ENCODE measurements at regions of chr1 and their contacts with region 1.

Region 1: DNA sequence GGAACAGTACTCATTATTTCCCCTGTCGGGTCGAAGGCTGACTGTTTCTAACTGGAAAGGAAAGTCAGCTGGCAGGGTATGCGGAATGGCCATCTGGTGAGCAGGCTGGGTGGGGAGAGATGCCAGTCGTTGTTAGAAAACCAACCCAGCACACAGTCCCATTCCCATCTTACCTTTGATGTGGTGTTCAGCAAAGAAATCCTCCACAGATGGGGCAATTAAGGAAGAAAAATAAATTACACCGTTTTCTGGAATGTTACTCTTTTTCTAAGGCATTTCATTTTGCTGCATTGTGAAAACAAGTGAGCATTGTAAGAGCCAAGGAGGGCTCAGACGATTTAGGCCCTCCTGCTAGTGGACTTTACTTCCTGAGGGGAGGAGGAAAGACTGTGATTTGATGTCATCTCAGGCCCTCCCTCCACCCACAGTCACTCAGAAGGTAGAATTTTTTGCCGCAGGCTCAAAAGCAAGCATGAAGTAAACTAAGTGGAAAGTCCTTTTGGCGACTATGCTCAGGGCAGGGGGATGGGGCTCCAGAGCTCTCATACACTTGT is at the start of gene SLC16A4:
- DNase-seq: peak; percentile 76
- ATAC-seq: peak; percentile 78
- H3K4me3 ChIP-seq: 0 out of 6 replicates have a peak within 1 kb of the TSS, but pooled peaks of 1 of the 3 experiments have one; percentile 0
- H3K27ac ChIP-seq: peak within 1 kb of the TSS; percentile 19
- H3K4me1 ChIP-seq: peaks cover 39% of the 10 kb centered on the region
- H3K27me3 ChIP-seq: no peaks in the 10 kb centered on the region
- CTCF ChIP-seq: no peak
- EP300 ChIP-seq: no peak
- POLR2A ChIP-seq: no peak
- RAD21 ChIP-seq: no peak
- total RNA-seq, gene SLC16A4: 0.60 and 1.1 TPM in 2 replicates

Region 2: GRCh38 chr1:109980739-109981271 is 410.0 kb before region 1 on chr1:
- CTCF ChIA-PET with region 1: no interaction called
- POLR2A ChIA-PET with region 1: no interaction called
- in situ Hi-C with region 1: no loop called
- intact Hi-C with region 1: no loop called
- DNase-seq: peak; percentile 32
- ATAC-seq: peak; percentile 22
- H3K4me3 ChIP-seq: no peak overlapping the region
- H3K27ac ChIP-seq: no peak overlapping the region
- H3K4me1 ChIP-seq: peaks cover 77% of the 10 kb centered on the region
- H3K27me3 ChIP-seq: no peaks in the 10 kb centered on the region; a peak in 1 of 5 replicates
- CTCF ChIP-seq: peak; percentile 89
- EP300 ChIP-seq: no peak
- POLR2A ChIP-seq: no peak
- RAD21 ChIP-seq: peak; percentile 87

Region 3: DNA sequence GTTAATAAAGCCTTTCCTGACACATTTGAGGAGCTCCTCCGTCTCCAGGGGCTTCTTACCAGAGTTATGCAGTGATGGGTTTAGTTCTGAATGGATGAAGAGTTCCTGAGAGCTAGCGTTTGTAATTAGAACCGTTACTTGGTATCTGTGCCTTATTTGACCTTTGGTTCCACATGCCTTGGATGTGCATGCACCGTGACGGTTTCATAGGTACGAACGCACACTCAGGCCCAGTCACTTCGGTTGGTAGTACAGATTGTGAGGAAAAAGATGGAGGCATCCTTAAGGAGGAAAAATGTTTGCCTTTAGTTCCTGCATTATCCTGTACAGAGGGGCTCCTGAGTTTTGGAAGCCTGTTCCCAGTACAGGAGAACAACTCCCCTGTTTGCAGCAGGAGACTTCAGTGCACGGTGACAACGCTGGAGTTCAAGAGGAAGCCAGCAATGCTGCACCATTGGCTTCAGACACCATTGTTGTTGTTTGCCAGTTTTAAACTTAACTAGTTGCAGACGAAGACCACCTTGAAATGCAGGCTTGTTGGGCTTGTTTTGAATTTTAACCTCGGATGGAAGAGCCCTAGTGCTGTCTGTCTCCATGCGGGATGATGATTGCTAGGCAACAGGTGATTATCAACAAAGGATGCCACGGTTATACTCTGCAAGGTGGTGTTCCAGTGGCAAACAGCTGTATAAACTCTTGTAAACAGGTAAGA is 43.4 kb before region 1 on chr1:
- CTCF ChIA-PET with region 1: no interaction called
- POLR2A ChIA-PET with region 1: no interaction called
- in situ Hi-C with region 1: no loop called
- intact Hi-C with region 1: loop called (anchors 5 kb)
- DNase-seq: no peak
- ATAC-seq: peak; percentile 32
- H3K4me3 ChIP-seq: 0 out of 6 replicates have a peak overlapping the region, but pooled peaks of 1 of the 3 experiments have one; percentile 7
- H3K27ac ChIP-seq: peak overlapping the region; percentile 12
- H3K4me1 ChIP-seq: peaks cover 89% of the 10 kb centered on the region
- H3K27me3 ChIP-seq: no peaks in the 10 kb centered on the region
- CTCF ChIP-seq: no peak
- EP300 ChIP-seq: no peak
- POLR2A ChIP-seq: no peak
- RAD21 ChIP-seq: no peak

Region 4: GRCh38 chr1:110524311-110525251 is 133.8 kb after region 1 on chr1:
- CTCF ChIA-PET with region 1: no interaction called
- POLR2A ChIA-PET with region 1: no interaction called
- in situ Hi-C with region 1: no loop called
- intact Hi-C with region 1: no loop called
- DNase-seq: peak; percentile 21
- ATAC-seq: peak; percentile 87
- H3K4me3 ChIP-seq: no peak overlapping the region; a peak in 1 of 6 replicates
- H3K27ac ChIP-seq: no peak overlapping the region
- H3K4me1 ChIP-seq: no peaks in the 10 kb centered on the region
- H3K27me3 ChIP-seq: no peaks in the 10 kb centered on the region; a peak in 1 of 5 replicates
- CTCF ChIP-seq: peak; percentile 80
- EP300 ChIP-seq: no peak
- POLR2A ChIP-seq: no peak
- RAD21 ChIP-seq: peak; percentile 38

Region 5: DNA sequence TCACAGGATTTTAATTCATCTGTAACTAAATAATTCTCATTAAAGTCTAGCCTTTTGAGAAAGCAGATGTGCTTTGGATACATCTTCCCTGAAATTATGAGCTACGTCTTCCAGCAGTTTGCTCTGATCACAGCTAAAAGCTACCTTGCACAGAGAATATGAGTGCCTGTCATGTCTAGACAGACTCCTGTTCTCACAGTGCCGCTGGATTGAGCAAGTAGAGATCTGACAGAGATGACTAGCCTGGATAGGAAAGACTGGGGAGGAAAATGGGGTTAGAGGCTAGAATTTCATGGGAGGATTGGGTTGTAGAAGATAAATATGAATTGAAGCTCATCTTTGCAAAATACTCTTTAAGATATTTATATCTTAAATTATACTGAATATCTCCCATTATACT is 773.4 kb after region 1 on chr1:
- CTCF ChIA-PET with region 1: no interaction called
- POLR2A ChIA-PET with region 1: no interaction called
- in situ Hi-C with region 1: no loop called
- intact Hi-C with region 1: no loop called
- DNase-seq: no peak
- ATAC-seq: no peak
- H3K4me3 ChIP-seq: no peak overlapping the region
- H3K27ac ChIP-seq: no peak overlapping the region
- H3K4me1 ChIP-seq: no peaks in the 10 kb centered on the region
- H3K27me3 ChIP-seq: no peaks in the 10 kb centered on the region
- CTCF ChIP-seq: no peak
- EP300 ChIP-seq: no peak
- POLR2A ChIP-seq: no peak
- RAD21 ChIP-seq: no peak